PC-3 (cell line): ENCODE measurements at regions of chr17 and their contacts with region 1.

Region 1: GRCh38 chr17:76408052-76408849 is 23.8 kb downstream of the SPHK1 start:
- DNase-seq: peak; percentile 91
- ATAC-seq: peak; percentile 72
- H3K4me3 ChIP-seq: no peak overlapping the region
- H3K27ac ChIP-seq: no peak overlapping the region
- H3K4me1 ChIP-seq: no peaks in the 10 kb centered on the region
- H3K27me3 ChIP-seq: no peaks in the 10 kb centered on the region
- CTCF ChIP-seq: peak; percentile 99

Region 2: DNA sequence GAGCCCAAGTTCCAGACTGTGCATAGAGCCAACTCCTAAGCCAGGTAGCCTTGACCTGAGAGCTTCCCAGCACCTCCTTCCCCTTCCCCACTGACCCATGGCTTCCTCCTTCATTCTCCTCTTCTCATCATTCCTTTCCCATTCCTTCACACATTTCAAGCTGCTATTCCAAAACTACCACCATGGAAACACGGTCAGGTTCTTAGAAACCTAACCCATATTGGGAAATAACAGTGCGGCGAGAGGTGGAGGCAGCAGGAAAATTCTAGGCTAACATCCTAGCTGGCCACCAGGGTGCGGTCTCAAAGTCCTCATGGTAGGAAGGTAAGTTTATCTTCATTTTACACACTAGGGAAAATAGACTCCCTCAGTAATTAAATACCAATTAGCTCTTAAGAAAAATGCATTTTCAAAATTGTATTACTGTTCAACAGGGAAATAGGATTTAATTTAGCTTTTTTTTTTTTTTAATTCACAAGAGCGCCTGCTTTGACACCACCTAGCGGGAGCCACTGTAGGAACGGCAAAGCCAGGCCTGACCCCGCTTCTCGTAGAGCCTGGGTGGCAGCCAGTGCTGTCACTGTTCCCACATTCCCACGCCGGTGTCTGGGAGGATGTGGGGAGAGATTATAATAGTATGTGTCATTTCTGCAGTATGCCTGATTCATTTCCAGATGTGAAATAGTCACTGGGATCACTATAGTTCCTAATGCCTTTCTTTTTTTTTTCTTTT is 37.8 kb before region 1 on chr17:
- CTCF ChIA-PET with region 1: no interaction called
- POLR2A ChIA-PET with region 1: no interaction called
- intact Hi-C with region 1: no loop called
- DNase-seq: peak; percentile 99
- ATAC-seq: peak; percentile 97
- H3K4me3 ChIP-seq: peak overlapping the region; percentile 8; the same call in 1 of the 2 replicates
- H3K27ac ChIP-seq: peak overlapping the region; percentile 80
- H3K4me1 ChIP-seq: peaks cover 28% of the 10 kb centered on the region
- H3K27me3 ChIP-seq: no peaks in the 10 kb centered on the region
- CTCF ChIP-seq: peak; percentile 100

Region 3: DNA sequence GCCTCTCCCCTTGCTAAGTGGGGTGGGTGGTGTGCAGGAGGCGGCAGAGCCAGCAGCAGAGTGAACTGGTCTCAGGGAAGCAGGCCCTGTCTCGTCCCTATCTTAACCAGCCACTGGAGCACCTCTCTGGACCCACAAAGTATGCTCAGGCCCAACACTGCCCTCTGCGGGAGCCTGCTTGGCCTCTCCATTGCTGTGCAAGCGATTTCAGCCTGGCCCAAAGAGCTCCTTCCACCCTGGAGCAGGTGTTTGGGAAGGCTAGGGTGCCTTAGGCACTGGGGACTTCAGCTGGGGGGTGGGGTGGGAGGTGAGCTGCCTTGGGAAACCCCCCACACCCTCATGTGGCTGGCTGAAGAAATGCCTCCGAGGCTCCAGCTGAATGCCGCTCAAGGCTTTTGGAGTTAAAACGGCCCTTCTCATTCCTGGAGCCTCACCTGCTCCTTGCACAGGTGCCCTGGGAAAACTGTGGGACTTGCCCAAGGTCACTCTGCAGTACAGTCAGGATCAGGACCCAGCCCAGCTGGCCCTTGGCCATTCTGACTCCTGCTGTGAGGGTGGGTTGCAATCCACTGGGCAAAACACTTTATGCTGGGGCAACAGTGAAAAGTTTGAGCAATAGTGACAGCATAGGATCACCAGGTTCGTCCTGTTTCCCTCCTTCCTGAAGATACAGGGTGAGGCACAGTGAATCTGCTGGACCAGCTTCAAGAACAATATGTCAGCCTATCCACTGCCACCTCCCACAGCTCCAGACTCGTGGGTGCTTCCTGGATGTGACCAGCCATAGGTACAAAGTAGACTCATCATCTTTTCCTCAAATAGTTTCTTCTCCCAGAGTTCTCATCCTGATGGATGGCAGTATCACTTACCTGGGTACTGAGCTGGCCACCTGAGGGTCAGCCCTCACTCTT is 50.6 kb after region 1 on chr17:
- CTCF ChIA-PET with region 1: interaction called, 50 read pairs
- POLR2A ChIA-PET with region 1: interaction called, 3 read pairs
- intact Hi-C with region 1: loop called (anchors 1 kb)
- DNase-seq: peak; percentile 86
- ATAC-seq: peak; percentile 97
- H3K4me3 ChIP-seq: no peak overlapping the region
- H3K27ac ChIP-seq: no peak overlapping the region
- H3K4me1 ChIP-seq: no peaks in the 10 kb centered on the region
- H3K27me3 ChIP-seq: no peaks in the 10 kb centered on the region
- CTCF ChIP-seq: peak; percentile 91

Region 4: GRCh38 chr17:76681222-76682137 is 273.2 kb after region 1 on chr17:
- CTCF ChIA-PET with region 1: no interaction called
- POLR2A ChIA-PET with region 1: no interaction called
- intact Hi-C with region 1: no loop called
- DNase-seq: peak; percentile 83
- ATAC-seq: peak; percentile 86
- H3K4me3 ChIP-seq: no peak overlapping the region
- H3K27ac ChIP-seq: no peak overlapping the region
- H3K4me1 ChIP-seq: no peaks in the 10 kb centered on the region
- H3K27me3 ChIP-seq: no peaks in the 10 kb centered on the region
- CTCF ChIP-seq: peak; percentile 96

Region 5: DNA sequence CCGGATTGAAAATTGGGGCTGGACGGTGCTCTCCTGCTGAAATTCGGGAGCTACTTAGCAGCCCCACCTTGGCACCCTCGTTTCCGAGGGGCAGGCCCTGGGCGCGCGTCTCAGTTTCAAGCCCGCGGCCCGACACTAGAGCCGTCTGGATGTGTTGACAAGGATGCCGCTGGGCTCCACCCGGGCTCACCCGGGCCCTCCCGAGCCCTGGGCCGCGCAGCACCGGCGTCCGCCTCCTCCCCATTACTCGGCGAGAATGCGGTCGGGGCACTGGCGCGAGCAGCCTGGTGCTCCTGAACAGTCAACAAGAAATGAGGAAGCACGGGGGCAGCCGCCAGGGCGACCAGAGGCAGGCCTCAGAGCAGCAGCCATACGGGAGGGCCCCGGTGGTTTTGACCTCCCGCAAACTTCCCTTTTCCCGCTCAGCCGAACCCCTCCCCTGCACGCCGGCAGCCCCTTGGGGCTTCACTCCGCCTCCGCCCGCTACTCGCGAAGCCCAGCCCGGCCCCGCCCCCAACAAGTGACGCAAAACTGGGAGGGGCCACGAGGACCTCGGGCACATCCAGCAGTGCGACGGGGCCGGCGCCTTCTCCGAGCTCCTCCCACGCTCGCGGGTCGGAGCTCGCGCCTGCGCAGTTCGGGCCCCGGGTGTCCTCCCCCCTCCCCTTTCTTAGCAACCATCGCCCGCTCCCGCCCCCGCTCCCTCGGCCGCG is 732.1 kb after region 1 on chr17:
- CTCF ChIA-PET with region 1: no interaction called
- POLR2A ChIA-PET with region 1: no interaction called
- intact Hi-C with region 1: no loop called
- DNase-seq: peak; percentile 99
- ATAC-seq: peak; percentile 83
- H3K4me3 ChIP-seq: peak overlapping the region; percentile 61
- H3K27ac ChIP-seq: peak overlapping the region; percentile 90
- H3K4me1 ChIP-seq: peaks cover 48% of the 10 kb centered on the region
- H3K27me3 ChIP-seq: no peaks in the 10 kb centered on the region
- CTCF ChIP-seq: no peak